Prostate gland (tissue), 2 donors: ENCODE measurements at regions of chr10 and their contacts with region 1.

Region 1: DNA sequence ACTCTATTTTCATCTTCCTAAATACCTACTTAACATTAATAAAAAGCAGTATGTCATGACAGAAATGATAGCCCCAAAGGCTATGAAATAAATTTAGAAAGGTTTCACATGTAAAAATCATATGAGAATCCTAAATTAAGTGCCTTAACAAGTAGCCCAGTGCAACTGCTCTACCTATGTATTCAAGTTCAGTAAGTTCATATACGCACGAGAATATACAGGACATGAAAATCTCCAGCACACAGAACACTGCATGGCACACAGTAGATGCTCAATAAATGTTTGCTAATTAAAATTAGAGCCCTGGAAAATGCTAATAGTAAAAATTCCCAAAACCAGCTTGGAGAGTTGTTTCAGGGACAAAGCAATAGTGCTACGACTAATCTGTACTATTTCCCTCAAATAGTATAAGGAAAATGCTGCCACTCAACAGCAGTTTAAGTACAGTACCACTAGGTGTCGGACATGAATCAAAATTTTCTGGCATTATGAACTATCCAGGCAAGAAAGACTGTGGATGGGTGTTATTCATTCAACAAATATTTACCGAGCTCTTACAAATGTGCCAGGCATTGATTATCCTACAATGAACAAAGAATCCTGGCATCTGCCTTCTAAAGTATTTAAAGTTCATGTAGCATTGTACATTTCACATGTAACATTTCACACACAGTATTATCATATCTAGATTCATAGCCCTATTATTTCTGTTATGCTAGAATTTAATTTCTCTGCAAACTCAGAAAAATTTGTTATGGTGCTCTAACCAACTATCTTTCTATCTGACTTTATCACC is 80.9 kb downstream of the ARHGAP21 start:
- DNase-seq: peak; percentile 35
- H3K4me3 ChIP-seq: no peak overlapping the region
- H3K27ac ChIP-seq: no peak overlapping the region
- H3K4me1 ChIP-seq: no peaks in the 10 kb centered on the region
- H3K27me3 ChIP-seq: no peaks in the 10 kb centered on the region
- CTCF ChIP-seq: peak; percentile 52 to 87 (median 80)
- POLR2A ChIP-seq: no peak

Region 2: GRCh38 chr10:24989867-24990266 is 347.0 kb after region 1 on chr10:
- intact Hi-C with region 1: loop called (anchors 10 kb)
- DNase-seq: no peak
- H3K4me3 ChIP-seq: no peak overlapping the region
- H3K27ac ChIP-seq: no peak overlapping the region
- H3K4me1 ChIP-seq: no peaks in the 10 kb centered on the region
- H3K27me3 ChIP-seq: no peaks in the 10 kb centered on the region
- CTCF ChIP-seq: peak in 1 of 4 experiments; percentile 15
- POLR2A ChIP-seq: no peak

Region 3: DNA sequence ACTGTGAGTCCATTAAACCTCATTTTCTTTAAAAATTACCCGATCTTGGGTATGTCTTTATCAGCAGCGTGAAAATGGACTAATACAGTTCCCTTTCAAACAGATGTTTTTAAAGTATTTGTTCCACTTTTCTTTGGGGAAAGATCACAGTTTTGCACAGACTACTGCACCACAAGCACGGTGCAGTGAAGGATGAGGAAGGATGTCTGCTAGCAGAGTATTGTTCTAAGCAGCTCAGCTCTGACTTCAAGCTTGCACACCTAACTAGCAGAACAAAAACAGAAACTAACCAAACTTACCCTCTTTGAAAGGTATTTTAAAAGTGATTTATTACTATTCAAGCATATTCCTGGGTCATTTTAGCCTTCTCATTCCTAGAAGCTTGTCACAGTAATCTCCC is 393.6 kb after region 1 on chr10:
- intact Hi-C with region 1: no loop called
- DNase-seq: no peak
- H3K4me3 ChIP-seq: no peak overlapping the region
- H3K27ac ChIP-seq: no peak overlapping the region
- H3K4me1 ChIP-seq: no peaks in the 10 kb centered on the region
- H3K27me3 ChIP-seq: no peaks in the 10 kb centered on the region
- CTCF ChIP-seq: no peak
- POLR2A ChIP-seq: no peak

Region 4: GRCh38 chr10:25080880-25081581 is 438.2 kb after region 1 on chr10:
- intact Hi-C with region 1: loop called (anchors 5 kb)
- DNase-seq: peak; percentile 82
- H3K4me3 ChIP-seq: no peak overlapping the region
- H3K27ac ChIP-seq: peak overlapping the region in 1 of 2 donors; percentile 45
- H3K4me1 ChIP-seq: no peaks in the 10 kb centered on the region
- H3K27me3 ChIP-seq: no peaks in the 10 kb centered on the region
- CTCF ChIP-seq: peak; percentile 51 to 88 (median 80)
- POLR2A ChIP-seq: no peak